Caco-2 (cell line): ENCODE measurements at regions of chr2 and their contacts with region 1.

Region 1: DNA sequence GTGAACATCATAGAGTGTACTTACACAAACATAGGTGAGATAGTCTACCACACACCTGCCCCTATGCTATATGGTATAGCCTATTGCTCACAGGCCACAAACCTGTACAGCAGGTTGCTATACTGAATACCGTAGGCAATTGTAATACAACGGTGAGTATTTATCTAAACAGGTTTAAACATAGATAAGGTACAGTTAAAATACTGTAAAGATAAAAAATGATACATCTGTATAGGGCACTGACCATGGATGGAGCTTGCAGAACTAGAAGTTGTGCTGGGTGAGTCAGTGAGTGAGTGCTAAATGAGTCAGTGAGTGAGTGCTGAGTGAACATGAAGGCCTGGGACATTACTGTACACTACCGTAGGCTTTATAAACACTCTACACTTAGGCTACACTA is 267.0 kb upstream of the HS6ST1 start:
- DNase-seq: no peak
- H3K4me3 ChIP-seq: no peak overlapping the region
- H3K4me3 Mint-ChIP-seq: no peak overlapping the region
- H3K27ac Mint-ChIP-seq: no peak overlapping the region
- H3K4me1 ChIP-seq: no peaks in the 10 kb centered on the region
- H3K4me1 Mint-ChIP-seq: no peaks in the 10 kb centered on the region
- H3K27me3 ChIP-seq: no peaks in the 10 kb centered on the region
- H3K27me3 Mint-ChIP-seq: peaks cover 5% of the 10 kb centered on the region
- CTCF ChIP-seq: no peak

Region 2: GRCh38 chr2:128605931-128606330 is 20.2 kb after region 1 on chr2:
- CTCF ChIA-PET with region 1: interaction called, 11 read pairs
- POLR2A ChIA-PET with region 1: no interaction called
- intact Hi-C with region 1: no loop called
- DNase-seq: peak in 1 of 2 experiments; percentile 12
- H3K4me3 ChIP-seq: no peak overlapping the region
- H3K4me3 Mint-ChIP-seq: no peak overlapping the region
- H3K27ac Mint-ChIP-seq: no peak overlapping the region
- H3K4me1 ChIP-seq: no peaks in the 10 kb centered on the region
- H3K4me1 Mint-ChIP-seq: no peaks in the 10 kb centered on the region
- H3K27me3 ChIP-seq: no peaks in the 10 kb centered on the region
- H3K27me3 Mint-ChIP-seq: no peaks in the 10 kb centered on the region
- CTCF ChIP-seq: no peak